Heart right ventricle (tissue), 16 donors: ENCODE measurements at regions of chr11 and their contacts with region 1.

Region 1: GRCh38 chr11:12235947-12236743 is 125.8 kb downstream of the MICAL2 start:
- DNase-seq: no peak
- ATAC-seq: peak; percentile 10 to 67 (median 50)
- H3K4me3 ChIP-seq: no peak overlapping the region
- H3K27ac ChIP-seq: peak overlapping the region in 8 of 10 donors; percentile 24 to 74 (median 50)
- H3K4me1 ChIP-seq: peaks cover 6 to 77% (median 44%) of the 10 kb centered on the region in 9 donors
- H3K27me3 ChIP-seq: no peaks in the 10 kb centered on the region
- CTCF ChIP-seq: peak; percentile 48 to 81 (median 75)

Region 2: GRCh38 chr11:11426226-11426952 is 809.8 kb before region 1 on chr11:
- intact Hi-C with region 1: no loop called
- DNase-seq: no peak
- ATAC-seq: peak in 1 of 8 donors; percentile 34
- H3K4me3 ChIP-seq: no peak overlapping the region
- H3K27ac ChIP-seq: peak overlapping the region in 5 of 10 donors; percentile 3 to 42 (median 28)
- H3K4me1 ChIP-seq: peaks cover 4 to 60% (median 33%) of the 10 kb centered on the region in 9 donors
- H3K27me3 ChIP-seq: peaks cover 0 to under 1% (median 0%) of the 10 kb centered on the region in 7 donors
- CTCF ChIP-seq: no peak

Region 3: DNA sequence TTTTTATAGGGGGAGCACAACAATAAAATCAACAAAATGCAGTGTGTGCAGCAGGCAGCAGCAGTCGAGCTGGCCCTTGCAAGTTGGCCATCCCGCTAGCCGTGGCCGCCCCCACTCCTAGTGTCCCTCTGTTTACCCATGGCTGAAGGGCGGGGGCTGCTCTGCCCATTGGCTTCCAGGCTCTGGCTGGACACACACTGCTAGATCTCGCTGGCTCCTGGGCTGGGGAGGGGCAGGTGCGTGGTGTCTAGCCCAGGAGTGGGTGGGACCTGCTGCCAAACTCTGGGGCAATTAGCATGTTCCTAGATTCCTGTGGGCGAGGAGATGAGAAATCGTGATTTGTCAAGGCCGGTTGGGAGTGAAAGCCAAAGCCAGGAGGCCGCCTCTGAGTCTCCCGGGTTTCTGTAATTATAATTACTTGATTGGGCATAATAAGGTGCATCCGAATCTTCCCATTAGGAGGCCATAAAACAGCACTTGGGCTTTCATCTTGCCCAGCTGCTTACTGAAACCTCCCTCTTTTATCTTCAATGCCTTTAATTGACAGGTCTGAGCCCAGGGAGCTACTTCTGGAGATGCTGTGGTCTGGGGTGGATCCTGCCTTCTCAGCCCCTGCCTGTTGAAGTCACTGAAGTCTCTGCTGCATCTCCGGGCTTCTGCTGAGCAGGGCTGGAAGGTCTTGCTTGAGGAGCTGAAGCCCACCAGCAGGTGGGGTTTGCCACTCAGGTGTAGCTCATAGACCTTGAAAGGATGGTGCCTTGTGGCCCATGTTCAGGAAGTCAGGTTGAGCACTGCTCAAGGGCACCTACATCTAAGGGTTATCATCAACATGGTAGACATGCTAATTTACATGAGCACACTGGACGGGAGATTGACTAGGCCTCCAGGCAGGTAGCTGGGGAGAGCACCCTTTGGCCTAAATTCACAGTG is 183.2 kb before region 1 on chr11:
- intact Hi-C with region 1: loop called in 8 of 10 experiments (anchors 5 to 10 kb)
- DNase-seq: no peak
- ATAC-seq: no peak
- H3K4me3 ChIP-seq: no peak overlapping the region
- H3K27ac ChIP-seq: peak overlapping the region in 2 of 10 donors; percentile 27 to 60
- H3K4me1 ChIP-seq: peaks cover 0 to 32% (median 15%) of the 10 kb centered on the region in 9 donors
- H3K27me3 ChIP-seq: no peaks in the 10 kb centered on the region
- CTCF ChIP-seq: no peak

Region 4: DNA sequence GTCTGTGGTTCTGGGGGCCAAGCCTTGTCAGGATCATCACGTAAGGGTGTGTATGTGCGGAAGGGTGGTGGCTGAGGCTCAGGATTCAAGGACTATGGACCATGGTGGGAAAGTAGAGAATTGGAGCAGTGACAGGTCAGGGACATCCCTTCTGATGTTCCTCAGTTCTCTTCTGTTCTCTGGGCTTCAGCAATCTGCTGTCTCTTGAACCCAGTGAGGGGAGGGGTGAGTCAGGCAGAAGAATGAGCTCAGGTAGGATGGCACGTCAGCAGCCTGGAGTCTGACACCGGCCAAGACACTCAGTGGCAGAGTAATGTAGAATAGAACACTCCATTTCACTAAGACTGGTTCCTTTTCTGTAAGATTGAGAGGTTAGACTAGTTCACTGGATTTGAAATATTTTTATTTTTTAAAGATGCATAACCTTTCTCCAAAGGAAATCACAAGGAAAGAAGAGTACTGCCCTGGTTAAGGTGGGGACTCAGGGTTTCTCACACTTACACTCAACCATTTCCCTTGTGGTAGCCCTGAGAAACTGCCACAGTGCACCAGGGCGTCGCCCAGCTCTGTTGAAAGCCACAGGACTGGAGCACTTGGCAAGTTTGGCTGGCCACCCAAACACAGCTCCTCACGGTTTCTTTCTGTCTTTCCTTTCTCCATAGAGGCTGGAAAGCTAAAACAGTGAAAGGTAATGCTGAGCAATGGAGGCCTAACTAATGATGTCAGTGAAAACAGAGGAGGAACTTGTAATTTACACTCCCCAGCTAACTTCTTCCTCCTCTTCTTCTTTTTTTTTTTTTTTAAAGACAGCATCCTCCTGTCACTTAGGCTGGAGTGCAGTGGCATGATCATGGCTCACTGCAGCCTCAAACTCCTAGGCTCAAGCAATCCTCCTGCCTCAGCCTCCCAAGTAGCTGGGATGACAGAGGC is 148.8 kb before region 1 on chr11:
- intact Hi-C with region 1: loop called in 8 of 10 experiments (anchors 1 to 5 kb)
- DNase-seq: no peak
- ATAC-seq: peak in 4 of 8 donors; percentile 6 to 22 (median 12)
- H3K4me3 ChIP-seq: no peak overlapping the region
- H3K27ac ChIP-seq: peak overlapping the region; percentile 58 to 90 (median 86)
- H3K4me1 ChIP-seq: peaks cover 35 to 76% (median 72%) of the 10 kb centered on the region in 9 donors
- H3K27me3 ChIP-seq: no peaks in the 10 kb centered on the region
- CTCF ChIP-seq: no peak

Region 5: GRCh38 chr11:12110201-12110713 is 125.9 kb before region 1 on chr11 and contains the start of gene MICAL2:
- intact Hi-C with region 1: loop called in 4 of 10 experiments (anchors 5 to 10 kb)
- DNase-seq: peak; percentile 90 to 92
- ATAC-seq: peak; percentile 95 to 98 (median 97)
- H3K4me3 ChIP-seq: peak within 1 kb of the TSS; percentile 72 to 97 (median 89)
- H3K27ac ChIP-seq: peak within 1 kb of the TSS; percentile 42 to 89 (median 87)
- H3K4me1 ChIP-seq: peaks cover 9 to 66% (median 41%) of the 10 kb centered on the region in 9 donors
- H3K27me3 ChIP-seq: no peaks in the 10 kb centered on the region
- CTCF ChIP-seq: no peak
- total RNA-seq, gene MICAL2: 38.1 to 95.7 (median 72.7) TPM

Region 6: DNA sequence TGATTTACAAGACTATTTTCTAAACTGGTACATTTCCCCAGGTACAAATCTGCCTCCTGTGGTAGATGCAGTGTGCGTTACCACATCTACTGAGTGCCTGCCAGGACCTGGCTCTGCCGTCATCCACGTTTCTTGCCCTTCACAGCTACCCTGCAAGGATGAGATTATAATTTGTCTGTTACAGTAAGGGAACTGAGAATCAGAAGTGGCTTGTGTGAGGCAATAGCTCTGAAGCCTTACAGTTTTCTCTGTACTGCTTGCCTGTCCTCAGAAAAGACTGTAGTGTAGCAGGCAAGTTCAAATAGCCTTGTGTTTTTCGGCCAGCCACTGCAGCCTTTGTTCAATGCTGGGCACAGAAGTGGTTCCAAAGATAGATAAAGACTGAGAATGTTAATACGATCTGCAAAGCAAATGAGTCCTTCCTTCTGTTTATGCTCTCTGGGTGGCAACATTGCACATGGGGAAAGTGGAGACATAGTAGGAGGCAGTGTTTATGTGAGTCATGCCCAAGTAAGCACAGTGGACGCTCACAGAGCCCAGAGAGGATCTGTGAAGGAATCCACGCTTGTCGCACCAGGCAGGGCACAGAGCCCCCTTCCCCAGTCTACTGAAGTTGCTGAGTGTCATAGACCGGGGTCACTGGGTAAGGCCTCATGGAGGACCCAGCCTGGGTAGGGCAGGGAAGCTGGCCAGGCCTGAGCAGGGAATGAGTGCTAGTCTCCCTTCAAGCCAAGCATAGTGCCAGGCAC is 76.6 kb before region 1 on chr11:
- intact Hi-C with region 1: loop called in 2 of 10 experiments (anchors 5 kb)
- DNase-seq: no peak
- ATAC-seq: peak in 7 of 8 donors; percentile 23 to 68 (median 48)
- H3K4me3 ChIP-seq: no peak overlapping the region
- H3K27ac ChIP-seq: peak overlapping the region; percentile 70 to 95 (median 88)
- H3K4me1 ChIP-seq: peaks cover 28 to 91% (median 83%) of the 10 kb centered on the region in 9 donors
- H3K27me3 ChIP-seq: no peaks in the 10 kb centered on the region
- CTCF ChIP-seq: peak in 2 of 9 donors; percentile 11 to 17

Region 7: GRCh38 chr11:12182676-12183541 is 53.2 kb before region 1 on chr11:
- intact Hi-C with region 1: loop called in 1 of 10 experiments (anchors 10 kb)
- DNase-seq: peak in 1 of 2 donors; percentile 74
- ATAC-seq: peak; percentile 66 to 87 (median 78)
- H3K4me3 ChIP-seq: no peak overlapping the region
- H3K27ac ChIP-seq: peak overlapping the region in 9 of 10 donors; percentile 66 to 88 (median 78)
- H3K4me1 ChIP-seq: peaks cover 21 to 96% (median 73%) of the 10 kb centered on the region in 9 donors
- H3K27me3 ChIP-seq: no peaks in the 10 kb centered on the region
- CTCF ChIP-seq: no peak

Region 8: DNA sequence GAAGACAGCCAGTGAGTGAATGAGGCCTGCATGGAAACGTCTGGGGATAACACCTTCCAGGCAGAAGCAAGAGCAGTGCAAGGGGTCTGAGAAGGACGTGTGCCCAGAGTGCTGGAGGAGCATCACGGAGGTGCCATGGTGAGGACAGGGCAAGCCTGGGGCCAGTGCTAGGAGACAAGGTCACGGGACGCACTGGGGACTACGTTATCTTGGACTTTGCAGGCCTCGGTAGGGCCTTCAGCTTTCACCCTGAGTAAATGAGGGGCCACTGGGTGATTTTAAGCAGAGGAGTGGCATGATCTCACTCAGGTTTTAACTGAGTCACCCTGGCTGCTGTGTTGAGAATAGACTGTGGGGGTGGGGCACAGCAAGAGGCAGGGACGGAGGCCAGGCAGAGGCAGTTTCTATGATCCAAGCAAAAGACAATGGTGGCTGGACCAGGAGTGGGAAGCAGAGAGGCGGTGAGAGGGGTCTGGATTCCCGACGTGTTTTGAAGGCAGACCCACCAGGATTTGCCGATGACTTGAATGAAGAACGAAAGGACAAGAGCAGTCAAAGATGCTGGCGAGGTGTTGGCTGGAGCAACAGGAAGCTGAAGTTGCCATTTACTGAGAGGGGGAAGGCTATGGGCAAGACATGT is 38.5 kb after region 1 on chr11:
- intact Hi-C with region 1: loop called in 1 of 10 experiments (anchors 5 kb)
- DNase-seq: no peak
- ATAC-seq: no peak
- H3K4me3 ChIP-seq: no peak overlapping the region
- H3K27ac ChIP-seq: no peak overlapping the region
- H3K4me1 ChIP-seq: peaks cover 0 to 10% (median 2%) of the 10 kb centered on the region in 9 donors
- H3K27me3 ChIP-seq: no peaks in the 10 kb centered on the region
- CTCF ChIP-seq: no peak